ENCODE measurements at regions of chr5 and their contacts with region 1.

Region 1: DNA sequence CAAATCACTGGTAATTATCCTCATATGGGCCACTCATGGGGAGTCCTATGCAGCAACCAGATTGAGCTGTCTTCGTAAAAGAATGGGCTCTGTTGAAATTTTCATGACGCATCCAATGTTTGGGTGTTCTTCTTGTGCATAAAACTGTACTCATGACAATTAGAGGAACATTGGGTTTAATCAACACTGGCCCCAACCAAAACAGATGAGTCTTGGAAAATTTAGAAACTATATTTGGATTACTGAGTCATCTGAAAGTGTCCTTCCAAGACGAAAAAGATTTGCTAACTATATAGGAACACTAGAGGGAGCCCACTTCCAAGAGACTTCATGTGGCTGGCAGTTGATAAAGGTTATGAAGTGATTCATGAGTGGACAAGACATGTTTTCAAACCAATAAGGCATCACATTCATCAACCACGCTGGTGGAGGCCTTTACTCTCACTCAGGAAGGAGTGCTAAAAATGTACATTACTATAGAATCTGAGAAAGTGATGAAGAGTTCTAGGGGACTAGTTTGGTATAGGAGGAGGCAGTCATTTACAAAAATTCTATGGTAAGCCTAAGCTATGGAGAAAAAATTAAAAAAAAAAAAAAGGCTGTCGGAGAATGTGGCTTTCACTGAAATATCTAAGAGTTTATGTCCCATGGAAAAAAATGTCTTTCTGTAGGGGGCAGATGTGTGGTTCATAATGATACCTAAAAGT is 313.5 kb downstream of the PRDM9 start:
- DNase-seq: no peak
- ATAC-seq: peak; percentile 35 to 86 (median 81)
- H3K4me3 ChIP-seq: no peak overlapping the region
- H3K27ac ChIP-seq: no peak overlapping the region
- H3K4me1 ChIP-seq: no peaks in the 10 kb centered on the region
- H3K27me3 ChIP-seq: no peaks in the 10 kb centered on the region
- CTCF ChIP-seq: peak in 3 of 4 donors; percentile 17 to 40 (median 31)

Region 2: GRCh38 chr5:22780760-22781159 is 1040.2 kb before region 1 on chr5:
- intact Hi-C with region 1: no loop called
- DNase-seq: no peak
- ATAC-seq: no peak
- H3K4me3 ChIP-seq: no peak overlapping the region
- H3K27ac ChIP-seq: no peak overlapping the region
- H3K4me1 ChIP-seq: no peaks in the 10 kb centered on the region
- H3K27me3 ChIP-seq: no peaks in the 10 kb centered on the region
- CTCF ChIP-seq: no peak

Region 3: GRCh38 chr5:24103470-24104023 is 282.6 kb after region 1 on chr5:
- intact Hi-C with region 1: loop called in 1 of 3 experiments (anchors 10 kb)
- DNase-seq: no peak
- ATAC-seq: no peak
- H3K4me3 ChIP-seq: no peak overlapping the region
- H3K27ac ChIP-seq: no peak overlapping the region
- H3K4me1 ChIP-seq: no peaks in the 10 kb centered on the region
- H3K27me3 ChIP-seq: no peaks in the 10 kb centered on the region
- CTCF ChIP-seq: no peak